ENCODE measurements at regions of chr15 and their contacts with region 1.

Region 1: GRCh38 chr15:71455107-71455506 is 339.8 kb downstream of the THSD4 start:
- DNase-seq: no peak
- H3K4me3 ChIP-seq: no peak overlapping the region
- H3K27ac ChIP-seq: no peak overlapping the region
- H3K4me1 ChIP-seq: peaks cover 0 to 5% (median 0%) of the 10 kb centered on the region in 3 donors
- H3K27me3 ChIP-seq: no peaks in the 10 kb centered on the region
- CTCF ChIP-seq: no peak

Region 2: GRCh38 chr15:71649894-71650293 is 194.8 kb after region 1 on chr15:
- intact Hi-C with region 1: loop called (anchors 10 kb)
- DNase-seq: no peak
- H3K4me3 ChIP-seq: no peak overlapping the region
- H3K27ac ChIP-seq: no peak overlapping the region
- H3K4me1 ChIP-seq: no peaks in the 10 kb centered on the region
- H3K27me3 ChIP-seq: no peaks in the 10 kb centered on the region
- CTCF ChIP-seq: no peak